AG04450 (cell line): ENCODE measurements at regions of chr1 and their contacts with region 1.

Region 1: GRCh38 chr1:24688621-24689195 is 45.6 kb downstream of the SRRM1 start:
- DNase-seq: peak; percentile 38
- H3K4me3 ChIP-seq: no peak overlapping the region
- H3K27ac ChIP-seq: no peak overlapping the region
- H3K27me3 ChIP-seq: no peaks in the 10 kb centered on the region
- CTCF ChIP-seq: peak; percentile 95

Region 2: GRCh38 chr1:24699628-24700027 is 10.9 kb after region 1 on chr1:
- CTCF ChIA-PET with region 1: interaction called, 16 read pairs
- POLR2A ChIA-PET with region 1: interaction called, 4 read pairs
- DNase-seq: no peak
- H3K4me3 ChIP-seq: no peak overlapping the region
- H3K27ac ChIP-seq: no peak overlapping the region
- H3K27me3 ChIP-seq: no peaks in the 10 kb centered on the region
- CTCF ChIP-seq: no peak

Region 3: DNA sequence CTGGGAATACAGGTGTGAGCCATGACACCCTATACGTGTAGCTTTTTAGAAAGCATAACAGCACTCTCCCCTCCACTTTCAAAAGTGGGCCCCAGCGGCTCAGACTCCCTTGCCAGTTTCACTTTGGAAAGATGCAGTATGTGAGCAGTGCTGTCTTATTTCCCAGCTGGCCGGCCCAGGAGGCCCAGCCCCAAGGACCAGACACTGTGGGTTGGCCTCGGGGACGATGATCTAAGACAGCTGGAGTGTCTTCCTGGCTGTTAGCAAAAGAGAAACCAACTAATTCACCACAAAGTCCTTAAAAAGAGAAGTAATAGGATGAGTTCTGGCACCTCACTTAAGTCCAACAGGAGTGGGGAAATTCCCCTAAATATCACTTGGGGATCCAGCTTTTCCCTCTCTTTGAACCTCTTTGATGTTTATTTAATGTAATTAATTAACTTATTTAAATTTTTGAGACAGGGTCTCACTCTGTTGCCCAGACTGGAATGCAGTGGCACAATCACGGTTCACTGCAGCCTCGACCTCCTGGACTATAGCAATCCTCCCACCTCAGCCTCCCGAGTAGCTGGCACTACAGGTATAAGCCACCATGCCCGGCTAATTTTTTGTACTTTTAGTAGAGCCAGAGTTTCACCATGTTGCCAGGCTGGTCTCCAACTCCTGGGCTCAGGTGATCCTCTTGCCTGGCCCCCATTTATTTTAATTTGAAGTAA is 39.0 kb after region 1 on chr1:
- CTCF ChIA-PET with region 1: interaction called, 17 read pairs
- POLR2A ChIA-PET with region 1: interaction called, 4 read pairs
- DNase-seq: no peak
- H3K4me3 ChIP-seq: peak overlapping the region; percentile 31; the same call in 1 of the 2 replicates
- H3K27ac ChIP-seq: peak overlapping the region; percentile 68
- H3K27me3 ChIP-seq: no peaks in the 10 kb centered on the region
- CTCF ChIP-seq: no peak

Region 4: GRCh38 chr1:24769656-24770651 is 81.2 kb after region 1 on chr1:
- CTCF ChIA-PET with region 1: interaction called, 13 read pairs
- POLR2A ChIA-PET with region 1: interaction called, 4 read pairs
- DNase-seq: peak; percentile 92
- H3K4me3 ChIP-seq: no peak overlapping the region
- H3K27ac ChIP-seq: peak overlapping the region; percentile 97
- H3K27me3 ChIP-seq: no peaks in the 10 kb centered on the region
- CTCF ChIP-seq: no peak

Region 5: DNA sequence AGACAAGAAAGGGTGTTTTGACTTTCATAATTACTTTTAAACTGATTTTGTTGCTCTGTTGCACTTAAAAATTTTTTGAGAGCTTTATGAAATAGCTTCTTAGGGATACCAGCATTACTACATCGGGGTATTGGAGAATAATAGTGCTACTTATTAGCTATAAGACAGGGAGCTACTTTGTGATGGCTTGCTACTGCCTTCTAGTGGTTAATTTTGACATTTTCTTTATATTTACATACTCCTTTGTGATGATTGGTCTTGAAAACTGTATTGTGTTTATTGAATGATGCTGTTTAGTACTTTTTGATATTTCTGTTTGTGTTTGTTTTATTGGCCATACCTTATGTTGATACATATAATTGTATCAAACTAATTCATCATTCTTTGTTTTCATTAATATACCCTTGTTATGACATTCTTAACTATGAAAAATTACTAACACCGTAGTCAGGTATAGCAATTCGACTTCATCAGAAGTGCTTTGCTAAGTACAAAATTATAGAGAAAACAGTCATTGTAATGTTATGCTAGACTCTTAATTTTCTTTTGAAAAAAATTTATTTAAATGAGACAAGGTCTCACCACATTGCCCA is 142.1 kb after region 1 on chr1:
- CTCF ChIA-PET with region 1: interaction called, 223 read pairs
- POLR2A ChIA-PET with region 1: interaction called, 6 read pairs
- DNase-seq: peak; percentile 36
- H3K4me3 ChIP-seq: no peak overlapping the region
- H3K27ac ChIP-seq: no peak overlapping the region
- H3K27me3 ChIP-seq: no peaks in the 10 kb centered on the region
- CTCF ChIP-seq: peak; percentile 84